Heart right ventricle (tissue), 16 donors: ENCODE measurements at regions of chr16 and their contacts with region 1.

Region 1: GRCh38 chr16:106623-107324 is 28.7 kb downstream of the MPG start:
- DNase-seq: peak in 1 of 2 donors; percentile 53
- ATAC-seq: peak in 4 of 8 donors; percentile 24 to 57 (median 46)
- H3K4me3 ChIP-seq: no peak overlapping the region
- H3K27ac ChIP-seq: no peak overlapping the region
- H3K4me1 ChIP-seq: peaks cover 0 to 27% (median 17%) of the 10 kb centered on the region in 9 donors
- H3K27me3 ChIP-seq: no peaks in the 10 kb centered on the region
- CTCF ChIP-seq: peak; percentile 70 to 88 (median 82)

Region 2: GRCh38 chr16:180938-181667 is 74.3 kb after region 1 on chr16:
- intact Hi-C with region 1: loop called in 9 of 10 experiments (anchors 1 to 5 kb)
- DNase-seq: peak; percentile 62 to 78
- ATAC-seq: peak; percentile 71 to 83 (median 76)
- H3K4me3 ChIP-seq: peak overlapping the region in 9 of 10 donors; percentile 22 to 47 (median 38)
- H3K27ac ChIP-seq: no peak overlapping the region
- H3K4me1 ChIP-seq: peaks cover 12 to 29% (median 17%) of the 10 kb centered on the region in 9 donors
- H3K27me3 ChIP-seq: peaks cover 15 to 48% (median 39%) of the 10 kb centered on the region in 7 donors
- CTCF ChIP-seq: peak; percentile 88 to 97 (median 93)

Region 3: DNA sequence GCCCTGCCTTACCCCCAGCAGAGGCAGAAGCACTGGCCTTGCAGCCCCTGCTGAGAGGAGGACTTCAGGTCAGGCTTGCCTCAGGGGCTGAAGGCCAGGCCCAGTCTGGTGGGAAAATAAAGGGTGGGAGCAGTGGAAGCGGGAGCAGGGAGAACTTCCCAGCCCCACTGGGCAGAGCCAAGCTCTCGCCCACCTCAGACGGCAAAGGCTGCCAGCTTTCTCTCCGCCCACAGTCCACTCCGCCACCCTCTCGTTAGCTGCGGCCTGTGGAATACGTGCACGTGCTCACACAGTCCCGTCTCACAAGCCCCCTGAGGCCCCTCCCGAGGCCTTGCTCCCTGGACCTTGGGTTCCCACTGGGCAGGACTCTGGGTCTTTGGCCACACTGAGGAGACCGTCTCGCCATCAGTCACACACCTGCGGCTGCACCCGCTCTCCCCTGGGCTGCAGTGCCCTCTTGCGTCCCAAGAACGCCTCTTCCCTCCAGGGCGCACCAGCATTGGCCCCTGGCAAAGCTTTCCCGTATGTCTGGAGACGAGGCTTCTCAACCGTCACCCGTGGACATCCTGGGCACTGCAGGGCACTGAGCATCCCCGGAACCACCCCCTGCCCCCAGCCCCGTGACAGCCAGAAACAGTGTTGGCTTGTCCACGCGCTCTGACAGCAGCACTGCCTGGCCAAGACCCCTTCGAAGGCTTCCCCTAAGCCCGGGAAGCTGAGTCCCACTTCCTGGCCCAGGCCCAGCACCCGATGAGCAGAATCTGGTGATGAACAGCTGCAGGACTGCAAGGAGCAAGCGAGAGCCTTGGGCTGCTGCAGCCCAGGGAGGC is 255.3 kb after region 1 on chr16:
- intact Hi-C with region 1: loop called in 5 of 10 experiments (anchors 2 to 5 kb)
- DNase-seq: peak; percentile 65 to 73
- ATAC-seq: peak; percentile 68 to 90 (median 83)
- H3K4me3 ChIP-seq: no peak overlapping the region
- H3K27ac ChIP-seq: no peak overlapping the region
- H3K4me1 ChIP-seq: peaks cover 0 to 7% (median 0%) of the 10 kb centered on the region in 9 donors
- H3K27me3 ChIP-seq: peaks cover 0 to 13% (median 3%) of the 10 kb centered on the region in 7 donors
- CTCF ChIP-seq: peak; percentile 58 to 83 (median 72)

Region 4: DNA sequence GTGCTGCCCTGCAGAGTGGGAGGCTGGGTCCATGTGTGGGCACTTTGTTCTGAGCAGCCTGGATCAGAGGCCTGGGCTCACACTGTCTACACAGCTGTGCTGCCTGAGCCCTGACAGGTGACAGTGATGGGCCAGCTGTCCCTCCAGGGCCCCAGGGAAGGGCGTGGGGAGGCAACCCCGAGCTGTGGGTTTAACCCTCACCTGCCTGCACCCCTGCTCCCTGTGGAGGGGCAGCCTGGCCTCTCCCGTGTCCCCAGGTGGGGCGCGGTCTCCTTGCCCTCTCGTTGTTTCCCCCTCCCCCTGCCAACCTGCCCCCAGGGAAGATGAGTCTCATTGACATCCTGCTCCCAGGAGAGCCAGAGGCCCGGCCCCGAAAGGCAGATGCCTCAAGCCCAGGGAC is 733.2 kb after region 1 on chr16:
- intact Hi-C with region 1: no loop called
- DNase-seq: no peak
- ATAC-seq: no peak
- H3K4me3 ChIP-seq: no peak overlapping the region
- H3K27ac ChIP-seq: no peak overlapping the region
- H3K4me1 ChIP-seq: no peaks in the 10 kb centered on the region
- H3K27me3 ChIP-seq: peaks cover 0 to 33% (median 10%) of the 10 kb centered on the region in 7 donors
- CTCF ChIP-seq: no peak